ENCODE measurements at regions of chr9 and their contacts with region 1.

Region 1: GRCh38 chr9:98067184-98067583 is 10.7 kb downstream of the NANS start:
- DNase-seq: no peak
- H3K4me3 Mint-ChIP-seq: no peak overlapping the region
- H3K27ac Mint-ChIP-seq: no peak overlapping the region
- H3K4me1 Mint-ChIP-seq: peaks cover 22% of the 10 kb centered on the region
- H3K27me3 Mint-ChIP-seq: no peaks in the 10 kb centered on the region

Region 2: GRCh38 chr9:98056269-98057137 is 10.7 kb before region 1 on chr9 and contains the start of gene NANS:
- CTCF ChIA-PET with region 1: interaction called, 16 read pairs
- POLR2A ChIA-PET with region 1: no interaction called
- DNase-seq: peak; percentile 94
- H3K4me3 Mint-ChIP-seq: peak within 1 kb of the TSS; percentile 93
- H3K27ac Mint-ChIP-seq: peak within 1 kb of the TSS; percentile 96
- H3K4me1 Mint-ChIP-seq: peaks cover 35% of the 10 kb centered on the region
- H3K27me3 Mint-ChIP-seq: no peaks in the 10 kb centered on the region
- total RNA-seq, gene NANS: 37.2 to 38.3 TPM